WTC11 (cell line): ENCODE measurements at regions of chr17 and their contacts with region 1.

Region 1: GRCh38 chr17:50626037-50626574 is 8.6 kb upstream of the ABCC3 start:
- DNase-seq: peak; percentile 88
- ATAC-seq: peak; percentile 75
- H3K4me3 Mint-ChIP-seq: no peak overlapping the region
- H3K27ac Mint-ChIP-seq: no peak overlapping the region
- H3K4me1 Mint-ChIP-seq: peaks cover 37% of the 10 kb centered on the region
- H3K27me3 Mint-ChIP-seq: peaks cover 4% of the 10 kb centered on the region
- CTCF ChIP-seq: peak; percentile 73

Region 2: GRCh38 chr17:50026901-50027630 is 599.0 kb before region 1 on chr17:
- CTCF ChIA-PET with region 1: no interaction called
- POLR2A ChIA-PET with region 1: no interaction called
- DNase-seq: peak; percentile 92
- ATAC-seq: peak; percentile 67
- H3K4me3 Mint-ChIP-seq: peak overlapping the region; percentile 53
- H3K27ac Mint-ChIP-seq: no peak overlapping the region
- H3K4me1 Mint-ChIP-seq: peaks cover 25% of the 10 kb centered on the region
- H3K27me3 Mint-ChIP-seq: peaks cover 11% of the 10 kb centered on the region
- CTCF ChIP-seq: peak; percentile 92

Region 3: GRCh38 chr17:50534222-50534978 is 91.7 kb before region 1 on chr17:
- CTCF ChIA-PET with region 1: interaction called, 19 read pairs
- POLR2A ChIA-PET with region 1: no interaction called
- DNase-seq: peak; percentile 58
- ATAC-seq: peak; percentile 67
- H3K4me3 Mint-ChIP-seq: peak overlapping the region; percentile 87
- H3K27ac Mint-ChIP-seq: no peak overlapping the region
- H3K4me1 Mint-ChIP-seq: peaks cover 46% of the 10 kb centered on the region
- H3K27me3 Mint-ChIP-seq: peaks cover 26% of the 10 kb centered on the region
- CTCF ChIP-seq: no peak

Region 4: DNA sequence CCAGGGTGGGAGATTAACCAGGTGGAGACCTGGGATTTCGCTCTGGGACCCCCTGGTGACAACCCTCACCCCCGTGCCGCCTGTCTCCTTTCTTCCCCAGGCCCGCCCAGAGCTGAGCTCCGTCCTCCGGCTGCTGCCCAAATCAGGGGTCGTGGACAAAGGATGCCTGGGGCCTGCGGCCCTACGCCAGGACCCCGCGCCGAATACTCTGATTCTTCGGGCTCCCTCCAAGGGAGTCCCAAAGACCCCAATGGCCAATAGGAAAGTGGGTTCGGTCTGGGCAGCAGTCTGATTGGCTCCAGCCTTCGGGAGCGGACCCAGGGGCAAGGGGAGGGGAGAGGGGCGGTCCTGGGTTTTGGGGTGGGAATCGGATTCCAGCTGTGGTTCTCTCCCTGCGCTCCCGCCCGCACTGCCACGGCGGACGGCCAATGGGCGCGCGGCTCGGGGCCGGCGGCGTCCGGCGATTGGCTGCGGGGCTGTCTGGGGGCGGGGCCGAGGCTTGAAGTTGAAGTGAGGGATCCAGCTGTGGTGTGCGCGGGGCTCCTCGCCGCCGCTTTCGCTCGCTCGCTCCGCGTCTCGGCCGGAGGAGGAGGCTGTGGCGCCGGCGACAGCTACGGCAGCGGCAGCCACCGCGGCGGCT is 65.8 kb before region 1 on chr17 and contains the start of gene CACNA1G:
- CTCF ChIA-PET with region 1: interaction called, 121 read pairs
- POLR2A ChIA-PET with region 1: interaction called, 4 read pairs
- DNase-seq: peak; percentile 98
- ATAC-seq: peak; percentile 83
- H3K4me3 Mint-ChIP-seq: peak within 1 kb of the TSS; percentile 87
- H3K27ac Mint-ChIP-seq: peak within 1 kb of the TSS; percentile 97
- H3K4me1 Mint-ChIP-seq: peaks cover 37% of the 10 kb centered on the region
- H3K27me3 Mint-ChIP-seq: peaks cover 75% of the 10 kb centered on the region
- CTCF ChIP-seq: no peak
- total RNA-seq, gene CACNA1G: 5.4 to 6.7 TPM (median 6.2 TPM) in 3 replicates

Region 5: DNA sequence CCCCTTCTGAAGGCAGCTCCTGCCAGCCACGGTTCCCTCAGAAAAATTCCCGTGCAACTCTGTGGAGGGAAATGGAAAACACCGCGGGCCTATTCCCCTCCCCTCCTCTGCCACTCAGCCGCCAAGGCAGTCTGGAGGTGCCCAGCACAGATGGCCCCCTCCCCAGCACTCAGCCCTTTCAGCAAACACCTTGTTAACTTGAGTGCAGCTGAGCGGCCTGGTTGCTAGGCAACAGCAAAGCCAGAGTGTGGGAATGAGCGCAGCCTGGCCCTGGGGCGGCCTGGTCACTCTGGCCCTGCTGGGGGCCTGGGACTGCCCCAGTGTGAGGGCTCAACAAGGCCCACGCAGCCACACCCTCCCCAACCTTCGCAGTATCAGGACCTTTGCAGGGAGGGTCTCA is 32.8 kb before region 1 on chr17:
- CTCF ChIA-PET with region 1: interaction called, 17 read pairs
- POLR2A ChIA-PET with region 1: interaction called, 3 read pairs
- DNase-seq: peak; percentile 64
- ATAC-seq: peak; percentile 32
- H3K4me3 Mint-ChIP-seq: no peak overlapping the region
- H3K27ac Mint-ChIP-seq: no peak overlapping the region
- H3K4me1 Mint-ChIP-seq: peaks cover 9% of the 10 kb centered on the region
- H3K27me3 Mint-ChIP-seq: no peaks in the 10 kb centered on the region
- CTCF ChIP-seq: no peak

Region 6: DNA sequence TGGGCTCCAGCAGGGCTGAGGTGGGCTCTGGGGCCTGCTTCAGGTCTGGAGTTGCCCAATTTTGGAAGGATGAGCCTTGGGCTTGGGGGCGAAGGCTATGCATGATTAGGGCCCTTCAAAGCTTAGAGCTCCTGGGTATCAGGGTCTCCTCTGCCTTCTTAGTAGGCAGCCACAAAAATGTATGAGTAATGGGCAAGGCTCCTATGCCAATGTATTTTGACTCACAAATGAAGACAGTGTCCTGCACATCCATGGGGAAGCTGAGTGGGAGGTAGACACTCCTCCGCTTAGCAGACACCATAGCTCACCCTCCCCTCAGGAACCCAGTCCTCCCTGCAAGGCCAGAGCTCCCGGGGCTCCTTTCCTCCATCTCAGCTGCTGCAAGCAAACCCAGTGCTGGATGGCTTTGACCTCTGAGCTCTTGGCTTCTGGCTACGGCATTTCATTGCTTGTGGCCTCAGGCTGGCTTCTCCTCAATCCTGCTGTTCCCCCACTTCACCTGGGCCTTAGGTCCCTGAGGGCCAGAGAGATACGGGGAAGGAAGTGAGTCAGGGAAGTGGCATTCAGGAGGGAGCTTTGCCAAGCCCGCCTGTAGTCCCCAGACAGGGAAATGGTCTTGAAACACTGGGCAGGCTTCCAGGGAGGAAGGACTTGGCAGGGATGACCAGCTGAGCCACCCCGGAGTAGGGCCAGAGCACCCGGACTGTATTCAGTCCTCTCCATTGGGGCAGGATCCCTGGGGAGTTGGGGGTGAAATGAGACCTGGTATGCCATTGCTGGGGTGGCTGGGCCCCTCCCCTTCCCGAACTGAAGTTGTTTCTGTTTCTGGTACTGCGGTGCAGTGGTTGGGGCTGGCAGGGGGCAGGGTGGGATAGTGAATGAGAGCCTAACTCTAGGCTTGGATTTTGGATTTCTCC is 13.0 kb after region 1 on chr17:
- CTCF ChIA-PET with region 1: interaction called, 82 read pairs
- POLR2A ChIA-PET with region 1: interaction called, 3 read pairs
- DNase-seq: no peak
- ATAC-seq: no peak
- H3K4me3 Mint-ChIP-seq: no peak overlapping the region
- H3K27ac Mint-ChIP-seq: no peak overlapping the region
- H3K4me1 Mint-ChIP-seq: peaks cover 8% of the 10 kb centered on the region
- H3K27me3 Mint-ChIP-seq: peaks cover 34% of the 10 kb centered on the region
- CTCF ChIP-seq: no peak

Region 7: GRCh38 chr17:50689251-50689650 is 63.1 kb after region 1 on chr17:
- CTCF ChIA-PET with region 1: interaction called, 13 read pairs
- POLR2A ChIA-PET with region 1: interaction called, 4 read pairs
- DNase-seq: no peak
- ATAC-seq: no peak
- H3K4me3 Mint-ChIP-seq: no peak overlapping the region
- H3K27ac Mint-ChIP-seq: no peak overlapping the region
- H3K4me1 Mint-ChIP-seq: peaks cover 27% of the 10 kb centered on the region
- H3K27me3 Mint-ChIP-seq: no peaks in the 10 kb centered on the region
- CTCF ChIP-seq: no peak